GM12878 (cell line): ENCODE measurements at regions of chr1 and their contacts with region 1.

Region 1: DNA sequence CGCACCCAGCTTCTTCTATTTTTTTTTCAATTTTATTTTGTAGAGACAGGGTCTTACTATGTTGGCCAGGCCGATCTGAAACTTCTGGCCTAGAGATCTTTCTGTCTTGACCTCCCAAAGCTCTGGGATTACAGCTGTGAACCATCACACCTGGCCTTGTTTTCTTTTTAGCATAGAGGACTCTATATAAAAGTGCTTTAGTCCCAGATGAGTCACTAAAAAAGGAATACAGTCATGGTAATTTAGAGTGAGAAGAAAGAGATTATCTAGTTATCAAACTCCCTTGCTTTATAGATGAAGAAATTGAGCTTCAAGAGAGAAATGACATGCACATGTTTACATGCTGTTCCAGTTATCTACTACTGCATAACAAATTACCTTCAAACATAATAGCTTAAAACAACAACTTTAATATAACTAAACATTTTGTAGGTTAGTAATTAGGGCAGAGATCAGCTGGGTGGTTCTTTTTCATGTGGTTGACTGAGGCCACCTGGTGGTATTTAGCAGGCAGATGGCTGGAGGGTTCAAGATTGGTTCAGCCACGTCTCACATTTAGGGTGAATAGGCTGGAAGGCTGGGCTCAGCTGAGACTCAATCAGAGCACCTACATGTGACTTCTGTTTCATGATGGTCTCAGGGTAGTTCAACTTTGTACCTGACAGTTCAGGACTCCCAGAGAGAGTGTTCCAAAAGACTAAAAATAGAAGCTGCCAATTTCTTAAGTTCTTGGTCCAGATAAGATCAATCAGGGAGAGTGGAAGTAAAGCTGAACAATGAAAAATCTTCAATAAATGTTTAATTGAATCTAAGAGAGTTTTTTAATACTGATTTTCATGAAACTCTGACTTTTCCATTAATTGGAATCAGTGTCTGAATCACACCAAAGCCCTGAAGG is 16.9 kb upstream of the MTF2 start:
- DNase-seq: no peak
- ATAC-seq: peak; percentile 99
- H3K4me3 ChIP-seq: no peak overlapping the region
- H3K27ac ChIP-seq: no peak overlapping the region
- H3K4me1 ChIP-seq: no peaks in the 10 kb centered on the region
- H3K27me3 ChIP-seq: no peaks in the 10 kb centered on the region; a peak in 1 of 4 replicates
- CTCF ChIP-seq: peak; percentile 67 to 83 (median 72)
- EP300 ChIP-seq: no peak
- POLR2A ChIP-seq: no peak
- RAD21 ChIP-seq: peak; percentile 90

Region 2: DNA sequence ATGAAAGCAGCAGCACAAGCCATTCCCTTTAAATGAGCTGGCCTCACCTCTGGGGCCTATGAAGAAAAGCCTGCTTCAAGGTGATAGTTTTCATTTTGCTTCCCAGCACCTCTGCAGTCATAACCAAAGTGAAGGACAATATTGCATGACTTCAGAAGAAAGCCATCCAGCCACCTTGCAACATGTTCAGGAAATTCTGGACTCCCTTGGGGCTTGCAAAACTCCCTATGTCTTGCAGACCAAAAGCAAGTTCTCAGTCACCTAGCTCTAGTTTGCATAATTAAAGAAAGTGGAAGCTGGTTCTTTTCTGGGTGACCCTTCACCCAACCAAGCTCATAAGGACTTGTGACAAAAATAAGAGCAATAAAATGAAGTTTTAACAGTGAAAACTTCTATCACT is 663.1 kb before region 1 on chr1:
- CTCF ChIA-PET with region 1: no interaction called
- POLR2A ChIA-PET with region 1: no interaction called
- RAD21 ChIA-PET with region 1: no interaction called
- SMC1A ChIA-PET with region 1: no interaction called
- in situ Hi-C with region 1: no loop called
- intact Hi-C with region 1: no loop called
- DNase-seq: peak; percentile 60
- ATAC-seq: peak; percentile 90
- H3K4me3 ChIP-seq: no peak overlapping the region
- H3K27ac ChIP-seq: no peak overlapping the region
- H3K4me1 ChIP-seq: peaks cover 5% of the 10 kb centered on the region; the same call in 1 of the 2 replicates
- H3K27me3 ChIP-seq: no peaks in the 10 kb centered on the region
- CTCF ChIP-seq: no peak
- EP300 ChIP-seq: peak in 1 of 2 experiments; percentile 49; a peak in 1 of 4 replicates
- POLR2A ChIP-seq: no peak
- RAD21 ChIP-seq: peak; percentile 13; the same call in 1 of the 2 replicates

Region 3: DNA sequence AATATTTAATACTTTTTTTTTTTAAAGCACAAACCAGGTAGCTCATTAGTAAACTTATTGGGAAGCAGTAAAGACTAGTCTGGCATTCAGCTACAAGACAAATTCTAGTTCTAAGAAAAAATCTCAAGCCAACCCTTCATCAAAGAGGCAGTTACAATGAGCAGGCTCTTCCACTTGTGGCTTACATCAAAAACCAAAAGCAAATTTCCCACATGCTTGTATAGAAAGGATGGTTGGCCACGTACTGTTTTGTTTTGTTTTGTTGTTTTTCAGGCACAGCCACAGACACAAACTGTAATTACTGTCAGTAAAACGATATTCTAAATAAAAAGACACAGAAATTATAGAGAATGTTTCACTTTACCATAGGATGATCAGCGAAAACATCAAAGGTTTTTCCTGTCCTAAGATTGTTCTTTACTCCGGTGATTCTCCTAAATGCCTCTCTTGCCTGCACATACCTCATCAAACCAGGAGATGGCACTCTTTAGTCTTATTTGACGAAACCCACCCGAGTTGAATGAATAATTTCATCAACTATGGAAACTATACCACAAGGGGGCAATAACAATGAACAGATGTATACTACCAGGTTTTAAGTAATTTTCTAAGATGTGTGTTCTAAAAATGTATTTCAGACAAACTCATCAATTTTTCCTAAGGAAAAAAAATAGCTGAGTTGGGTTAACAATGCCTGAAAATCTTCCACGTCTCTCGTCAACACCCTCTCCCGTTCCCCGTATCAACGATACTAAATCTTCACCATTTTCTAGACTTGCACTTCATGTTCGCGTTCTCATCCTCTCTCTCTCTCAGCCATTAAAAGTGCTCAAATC is 203.4 kb before region 1 on chr1:
- CTCF ChIA-PET with region 1: interaction called, 10 read pairs
- POLR2A ChIA-PET with region 1: no interaction called
- RAD21 ChIA-PET with region 1: interaction called, 6 read pairs
- SMC1A ChIA-PET with region 1: interaction called, 17 read pairs
- in situ Hi-C with region 1: no loop called
- intact Hi-C with region 1: loop called (anchors 2 kb)
- DNase-seq: peak; percentile 59
- ATAC-seq: peak; percentile 90
- H3K4me3 ChIP-seq: no peak overlapping the region
- H3K27ac ChIP-seq: no peak overlapping the region
- H3K4me1 ChIP-seq: peaks cover 9% of the 10 kb centered on the region
- H3K27me3 ChIP-seq: no peaks in the 10 kb centered on the region
- CTCF ChIP-seq: peak; percentile 78 to 99 (median 96)
- EP300 ChIP-seq: no peak
- POLR2A ChIP-seq: no peak
- RAD21 ChIP-seq: peak; percentile 100

Region 4: DNA sequence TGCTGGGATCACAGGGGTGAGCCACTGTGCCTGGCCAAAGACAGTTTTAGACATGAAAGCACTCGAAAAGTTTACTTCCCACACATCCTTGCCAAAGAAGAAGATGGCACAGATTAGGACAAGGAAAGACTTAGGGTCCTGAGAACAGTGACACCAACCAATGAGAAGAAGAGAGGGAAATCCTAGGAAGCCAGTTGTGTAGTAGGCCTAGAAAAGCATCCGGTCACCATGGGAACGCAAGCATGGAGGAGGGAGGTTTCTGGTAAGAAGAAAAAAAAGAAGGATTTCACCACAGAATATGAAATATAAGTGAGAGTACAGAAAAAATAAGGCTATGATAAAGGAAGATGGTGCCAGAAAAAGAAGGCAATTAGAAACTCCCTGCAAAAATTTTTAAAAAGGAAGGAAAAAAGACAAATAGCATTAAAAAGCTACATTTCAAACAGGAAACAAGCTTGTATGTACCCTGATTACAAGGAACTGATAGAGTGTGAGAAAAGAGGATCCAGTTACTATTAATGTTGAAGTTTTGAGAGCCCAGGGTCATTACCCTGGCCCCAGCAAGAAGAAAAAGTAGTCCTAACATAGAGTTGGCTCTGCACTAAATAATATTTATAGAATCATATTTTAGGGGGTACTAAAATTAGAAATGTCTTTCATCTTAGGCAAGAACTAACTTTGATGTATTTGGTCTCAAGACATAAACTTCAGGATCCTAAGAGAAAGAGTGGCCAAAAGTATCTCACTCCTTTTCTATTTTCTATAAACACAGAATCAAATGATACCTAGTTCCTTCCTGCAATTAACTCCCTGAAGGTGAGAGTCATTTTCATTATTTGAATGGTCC is 117.0 kb before region 1 on chr1:
- CTCF ChIA-PET with region 1: no interaction called
- POLR2A ChIA-PET with region 1: no interaction called
- RAD21 ChIA-PET with region 1: no interaction called
- SMC1A ChIA-PET with region 1: no interaction called
- in situ Hi-C with region 1: no loop called
- intact Hi-C with region 1: no loop called
- DNase-seq: no peak
- ATAC-seq: peak; percentile 73
- H3K4me3 ChIP-seq: peak overlapping the region; percentile 22; the same call in 1 of the 2 replicates
- H3K27ac ChIP-seq: peak overlapping the region; percentile 3
- H3K4me1 ChIP-seq: peaks cover 29% of the 10 kb centered on the region
- H3K27me3 ChIP-seq: no peaks in the 10 kb centered on the region
- CTCF ChIP-seq: no peak
- EP300 ChIP-seq: no peak
- POLR2A ChIP-seq: no peak
- RAD21 ChIP-seq: no peak

Region 5: GRCh38 chr1:93000751-93001175 is 61.4 kb before region 1 on chr1:
- CTCF ChIA-PET with region 1: interaction called, 9 read pairs
- POLR2A ChIA-PET with region 1: no interaction called
- RAD21 ChIA-PET with region 1: interaction called, 7 read pairs
- SMC1A ChIA-PET with region 1: interaction called, 13 read pairs
- in situ Hi-C with region 1: no loop called
- intact Hi-C with region 1: no loop called
- DNase-seq: no peak
- ATAC-seq: peak; percentile 71
- H3K4me3 ChIP-seq: no peak overlapping the region
- H3K27ac ChIP-seq: no peak overlapping the region
- H3K4me1 ChIP-seq: peaks cover 6% of the 10 kb centered on the region
- H3K27me3 ChIP-seq: no peaks in the 10 kb centered on the region
- CTCF ChIP-seq: no peak
- EP300 ChIP-seq: no peak
- POLR2A ChIP-seq: no peak
- RAD21 ChIP-seq: no peak

Region 6: DNA sequence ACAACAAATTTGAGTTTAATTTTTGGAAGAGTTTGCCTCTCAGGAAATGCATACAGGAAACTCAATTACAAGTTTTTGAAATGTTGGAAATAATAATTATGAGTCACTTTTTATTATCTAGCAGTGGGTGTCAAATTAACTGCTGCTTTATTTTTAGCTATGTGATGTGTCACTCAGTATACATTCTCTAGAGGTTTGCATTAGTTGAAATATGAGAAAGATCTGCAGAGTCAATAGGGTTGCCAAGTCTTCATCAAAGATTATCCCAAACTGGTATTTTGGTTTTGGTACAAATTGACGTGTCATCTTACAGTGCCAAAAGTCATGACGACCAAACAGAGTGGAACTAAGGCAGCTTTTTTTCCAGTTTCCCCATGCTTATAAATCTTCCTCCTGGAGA is 46.6 kb before region 1 on chr1:
- CTCF ChIA-PET with region 1: interaction called, 445 read pairs
- POLR2A ChIA-PET with region 1: interaction called, 3 read pairs
- RAD21 ChIA-PET with region 1: interaction called, 33 read pairs
- SMC1A ChIA-PET with region 1: interaction called, 49 read pairs
- in situ Hi-C with region 1: no loop called
- intact Hi-C with region 1: no loop called
- DNase-seq: no peak
- ATAC-seq: no peak
- H3K4me3 ChIP-seq: no peak overlapping the region
- H3K27ac ChIP-seq: no peak overlapping the region
- H3K4me1 ChIP-seq: peaks cover 21% of the 10 kb centered on the region
- H3K27me3 ChIP-seq: no peaks in the 10 kb centered on the region
- CTCF ChIP-seq: no peak
- EP300 ChIP-seq: no peak
- POLR2A ChIP-seq: no peak
- RAD21 ChIP-seq: no peak

Region 7: DNA sequence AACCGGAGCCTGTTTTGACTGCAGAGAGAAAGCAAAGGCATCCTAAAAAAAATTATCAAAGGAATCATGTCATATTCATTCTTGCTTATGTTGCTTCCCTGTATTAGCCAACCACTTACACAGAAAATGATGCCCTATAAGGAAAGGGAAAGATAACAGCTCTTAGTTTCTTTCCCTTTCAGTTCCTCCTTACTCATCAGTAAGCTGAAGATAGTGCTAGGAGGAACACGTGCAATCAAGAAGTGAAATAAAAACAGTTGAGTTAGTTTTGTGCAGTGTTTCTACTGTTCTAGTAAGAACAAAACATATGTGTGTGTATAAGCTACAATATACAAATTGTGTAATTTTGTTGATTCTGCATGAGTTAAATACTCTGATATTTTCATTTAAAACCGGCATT is 28.4 kb before region 1 on chr1:
- CTCF ChIA-PET with region 1: interaction called, 445 read pairs
- POLR2A ChIA-PET with region 1: no interaction called
- RAD21 ChIA-PET with region 1: interaction called, 8 read pairs
- SMC1A ChIA-PET with region 1: interaction called, 11 read pairs
- in situ Hi-C with region 1: loop called (anchors 5 kb)
- intact Hi-C with region 1: no loop called
- DNase-seq: peak; percentile 48
- ATAC-seq: peak; percentile 97
- H3K4me3 ChIP-seq: peak overlapping the region; percentile 41; the same call in 1 of the 2 replicates
- H3K27ac ChIP-seq: peak overlapping the region; percentile 59
- H3K4me1 ChIP-seq: peaks cover 25% of the 10 kb centered on the region
- H3K27me3 ChIP-seq: no peaks in the 10 kb centered on the region
- CTCF ChIP-seq: no peak
- EP300 ChIP-seq: no peak
- POLR2A ChIP-seq: no peak
- RAD21 ChIP-seq: no peak

Region 8: DNA sequence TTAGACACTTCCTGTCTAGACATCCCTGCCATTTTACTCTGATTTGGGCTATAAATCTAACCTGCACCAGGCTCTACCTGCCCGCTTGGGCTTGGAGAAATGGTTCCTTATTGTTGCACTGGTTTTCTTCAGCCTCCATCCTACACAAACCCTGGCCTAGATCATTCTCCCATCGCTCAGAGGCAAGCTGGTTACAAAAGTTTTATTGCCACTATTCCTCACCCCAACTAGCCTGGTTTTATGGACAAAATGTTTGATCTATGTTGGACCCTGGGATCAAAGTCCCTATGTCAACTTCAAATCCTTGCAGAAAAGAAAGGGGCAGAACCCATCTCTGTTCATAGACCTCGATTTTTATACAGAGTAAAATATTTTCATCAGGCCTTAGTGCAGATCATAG is 14.5 kb before region 1 on chr1:
- CTCF ChIA-PET with region 1: interaction called, 21 read pairs
- POLR2A ChIA-PET with region 1: no interaction called
- RAD21 ChIA-PET with region 1: interaction called, 4 read pairs
- SMC1A ChIA-PET with region 1: interaction called, 14 read pairs
- in situ Hi-C with region 1: no loop called
- intact Hi-C with region 1: no loop called
- DNase-seq: no peak
- ATAC-seq: no peak
- H3K4me3 ChIP-seq: no peak overlapping the region
- H3K27ac ChIP-seq: no peak overlapping the region
- H3K4me1 ChIP-seq: no peaks in the 10 kb centered on the region
- H3K27me3 ChIP-seq: no peaks in the 10 kb centered on the region
- CTCF ChIP-seq: no peak
- EP300 ChIP-seq: no peak
- POLR2A ChIP-seq: no peak
- RAD21 ChIP-seq: no peak